ENCODE measurements at regions of chr11 and their contacts with region 1.

Region 1: DNA sequence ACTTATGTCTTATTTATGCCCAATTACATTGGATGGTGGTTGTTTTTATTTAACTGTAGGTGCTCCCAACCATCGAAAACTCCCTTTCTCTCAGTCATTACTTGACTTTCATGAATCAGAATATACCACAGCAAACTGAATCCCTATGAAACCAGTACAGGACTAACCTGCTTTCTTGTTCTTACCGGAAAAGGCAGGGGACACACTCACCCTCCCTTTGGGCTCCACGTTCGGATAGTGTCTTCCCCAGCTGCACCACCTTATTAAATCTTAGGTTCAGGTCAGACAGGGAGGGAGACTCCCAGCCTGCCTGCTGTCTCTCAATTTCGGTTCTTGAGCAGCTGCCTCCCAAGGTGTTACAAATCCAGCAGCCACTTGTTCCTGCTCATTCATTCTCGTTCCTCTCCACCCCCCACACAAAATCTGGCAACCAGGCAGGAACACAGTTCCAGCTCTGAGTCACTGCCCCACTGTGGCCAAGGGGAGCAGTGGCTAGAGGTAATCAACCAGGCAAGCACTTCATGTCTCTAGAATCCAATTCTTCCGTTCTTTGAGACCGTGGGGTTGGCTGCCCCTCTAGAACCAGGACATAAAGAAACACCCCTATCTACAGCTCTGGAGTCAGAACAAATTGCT is 133.0 kb downstream of the PLEKHA7 start:
- DNase-seq: peak; percentile 83
- H3K4me3 Mint-ChIP-seq: peak overlapping the region; percentile 62
- H3K27ac Mint-ChIP-seq: peak overlapping the region; percentile 95
- H3K4me1 Mint-ChIP-seq: peaks cover 90% of the 10 kb centered on the region
- H3K27me3 Mint-ChIP-seq: no peaks in the 10 kb centered on the region
- CTCF ChIP-seq: peak; percentile 29

Region 2: GRCh38 chr11:16785520-16786128 is 95.6 kb before region 1 on chr11:
- CTCF ChIA-PET with region 1: interaction called, 5 read pairs
- intact Hi-C with region 1: loop called (anchors 5 kb)
- DNase-seq: peak; percentile 72
- H3K4me3 Mint-ChIP-seq: no peak overlapping the region
- H3K27ac Mint-ChIP-seq: peak overlapping the region; percentile 42
- H3K4me1 Mint-ChIP-seq: peaks cover 84% of the 10 kb centered on the region
- H3K27me3 Mint-ChIP-seq: no peaks in the 10 kb centered on the region
- CTCF ChIP-seq: peak; percentile 86

Region 3: DNA sequence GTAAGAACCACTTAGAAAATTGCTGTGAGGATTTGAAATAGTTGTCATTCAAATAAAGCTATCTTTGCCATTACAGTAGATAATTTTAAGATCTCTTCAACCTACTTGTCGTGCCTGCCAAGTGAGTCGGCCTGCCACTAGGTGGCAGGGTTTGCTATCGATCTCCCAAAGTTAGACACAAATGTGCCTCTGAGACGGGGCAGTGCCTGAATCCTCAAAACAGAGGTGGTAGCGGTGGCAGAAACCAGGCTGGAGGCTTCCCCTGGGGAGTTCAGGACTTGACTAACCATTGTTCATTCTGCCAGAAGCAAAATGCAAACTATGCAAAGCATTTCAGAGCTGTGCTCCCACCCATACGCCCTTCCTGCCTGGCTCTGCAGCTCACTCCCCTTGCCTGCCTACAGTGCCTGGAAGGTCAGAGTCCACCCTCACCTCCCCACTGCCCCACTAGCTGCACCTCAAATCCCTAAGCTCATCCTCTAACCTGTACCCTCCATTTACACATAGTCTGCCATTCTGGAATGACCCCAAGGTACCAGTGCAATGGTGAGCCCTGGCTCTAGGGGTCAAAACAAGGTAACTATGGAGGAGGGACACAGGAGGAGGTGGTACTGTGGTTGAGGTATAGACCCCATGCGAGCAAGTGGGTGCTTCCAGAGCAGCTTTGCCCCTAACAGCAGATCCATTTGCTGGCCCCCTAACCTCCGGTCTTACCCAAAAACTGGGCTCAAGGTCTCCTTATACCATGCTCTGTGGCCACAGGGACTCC is 60.7 kb before region 1 on chr11:
- CTCF ChIA-PET with region 1: interaction called, 11 read pairs
- intact Hi-C with region 1: loop called (anchors 2 kb)
- DNase-seq: peak; percentile 71
- H3K4me3 Mint-ChIP-seq: peak overlapping the region; percentile 26
- H3K27ac Mint-ChIP-seq: peak overlapping the region; percentile 37
- H3K4me1 Mint-ChIP-seq: peaks cover 62% of the 10 kb centered on the region
- H3K27me3 Mint-ChIP-seq: no peaks in the 10 kb centered on the region
- CTCF ChIP-seq: peak; percentile 82

Region 4: GRCh38 chr11:16917941-16918340 is 36.7 kb after region 1 on chr11:
- CTCF ChIA-PET with region 1: interaction called, 13 read pairs
- intact Hi-C with region 1: loop called (anchors 2 kb)
- DNase-seq: peak; percentile 26
- H3K4me3 Mint-ChIP-seq: peak overlapping the region; percentile 45
- H3K27ac Mint-ChIP-seq: peak overlapping the region; percentile 94
- H3K4me1 Mint-ChIP-seq: peaks cover 84% of the 10 kb centered on the region
- H3K27me3 Mint-ChIP-seq: no peaks in the 10 kb centered on the region
- CTCF ChIP-seq: no peak

Region 5: DNA sequence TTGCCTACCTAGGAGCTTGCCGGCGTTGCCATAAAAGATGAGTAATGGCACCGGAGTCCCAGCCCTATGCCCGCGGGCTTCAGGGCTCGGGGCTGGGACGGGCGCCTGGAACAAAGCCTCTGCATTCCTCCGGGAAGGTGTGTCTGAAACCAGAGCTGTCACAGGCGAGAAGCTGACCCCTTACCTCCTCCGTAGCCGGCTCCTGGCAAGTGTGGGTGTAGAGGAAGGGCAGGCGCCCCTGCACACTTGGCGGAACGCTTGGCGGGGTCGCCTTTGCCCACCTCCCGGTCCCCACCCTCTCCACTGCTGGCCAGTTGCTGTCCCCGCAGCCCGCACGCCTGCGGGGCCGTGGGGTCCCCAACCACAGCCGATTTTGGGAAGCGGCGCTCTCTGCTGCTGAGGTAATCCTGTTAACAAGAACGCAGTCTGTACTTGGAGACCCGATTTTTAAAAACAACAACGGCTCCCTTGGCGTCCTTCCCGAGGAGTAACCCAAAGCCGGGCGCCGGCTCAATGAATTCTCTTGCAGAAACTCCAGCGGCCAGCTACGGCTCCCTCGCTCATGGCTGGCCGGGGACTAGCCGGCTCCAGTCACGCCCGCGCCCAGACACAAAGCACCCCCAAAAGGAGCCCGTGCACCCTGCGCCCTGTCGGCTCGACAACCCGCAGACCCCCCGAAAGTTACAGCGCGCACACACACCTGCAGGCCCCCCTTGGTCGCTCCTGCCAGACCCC is 43.8 kb after region 1 on chr11:
- CTCF ChIA-PET with region 1: interaction called, 9 read pairs
- intact Hi-C with region 1: loop called (anchors 1 kb)
- DNase-seq: peak; percentile 93
- H3K4me3 Mint-ChIP-seq: peak overlapping the region; percentile 95
- H3K27ac Mint-ChIP-seq: peak overlapping the region; percentile 87
- H3K4me1 Mint-ChIP-seq: peaks cover 57% of the 10 kb centered on the region
- H3K27me3 Mint-ChIP-seq: no peaks in the 10 kb centered on the region
- CTCF ChIP-seq: no peak

Region 6: GRCh38 chr11:17276236-17277023 is 395.2 kb after region 1 on chr11 and contains the start of gene NUCB2:
- CTCF ChIA-PET with region 1: interaction called, 11 read pairs
- intact Hi-C with region 1: no loop called
- DNase-seq: peak; percentile 97
- H3K4me3 Mint-ChIP-seq: peak within 1 kb of the TSS; percentile 69
- H3K27ac Mint-ChIP-seq: peak within 1 kb of the TSS; percentile 94
- H3K4me1 Mint-ChIP-seq: peaks cover 17% of the 10 kb centered on the region
- H3K27me3 Mint-ChIP-seq: no peaks in the 10 kb centered on the region
- CTCF ChIP-seq: no peak
- total RNA-seq, gene NUCB2: 53.2 and 58.6 TPM in 2 replicates

Measured in Calu3 (cell line).